Activated CD4-positive, alpha-beta memory T cell treated with anti-CD3 and anti-CD28 coated beads for 36 hours (primary cell): ENCODE measurements at regions of chr2 and their contacts with region 1.

Region 1: GRCh38 chr2:134207564-134208209 is 46.2 kb upstream of the MGAT5 start:
- DNase-seq: peak; percentile 76
- H3K4me3 Mint-ChIP-seq: no peak overlapping the region
- H3K27ac Mint-ChIP-seq: no peak overlapping the region
- H3K4me1 Mint-ChIP-seq: peaks cover 14% of the 10 kb centered on the region
- H3K27me3 Mint-ChIP-seq: no peaks in the 10 kb centered on the region

Region 2: DNA sequence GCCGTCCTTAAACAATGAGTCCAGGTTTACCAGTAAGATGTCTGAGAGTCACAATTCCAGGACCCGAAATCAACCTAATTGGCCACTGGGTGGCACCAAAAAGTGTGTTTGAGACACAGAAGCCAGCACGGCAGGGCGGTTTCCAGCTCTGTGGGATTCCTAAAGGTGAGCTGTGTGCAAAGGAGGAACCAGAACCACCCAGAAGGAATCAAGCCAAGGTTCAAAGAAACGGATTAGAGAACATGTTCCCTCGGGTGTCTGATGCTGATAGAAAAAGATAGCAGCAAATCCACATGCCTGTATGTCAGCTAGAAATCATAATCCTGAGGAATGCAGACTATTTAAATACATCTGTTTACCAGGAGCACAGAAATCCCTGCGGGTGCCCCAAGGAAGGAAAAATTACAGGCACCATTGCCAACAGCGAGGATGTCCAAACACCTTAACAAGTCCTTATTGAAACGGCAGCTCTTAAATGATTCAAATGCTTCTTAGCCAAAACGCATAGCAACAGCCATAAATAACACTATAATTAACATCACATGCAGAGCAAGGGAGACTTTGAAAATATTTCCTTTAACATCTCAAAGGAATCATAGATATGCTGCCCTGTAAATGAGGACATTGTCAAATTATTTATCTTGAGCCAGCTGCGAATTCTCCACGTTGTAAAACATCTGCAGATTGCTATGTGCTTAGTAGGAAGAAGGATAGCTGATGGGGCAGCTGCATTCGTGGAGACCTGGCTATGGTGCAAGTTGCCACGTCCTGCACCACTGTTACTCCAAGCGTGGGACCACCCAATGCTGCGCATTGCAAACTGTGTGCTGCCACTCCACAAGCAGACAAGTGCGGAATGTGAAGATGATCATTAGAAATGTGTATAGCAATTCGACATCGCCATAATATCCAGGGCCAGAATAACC is 320.7 kb before region 1 on chr2:
- CTCF ChIA-PET with region 1: interaction called, 8 read pairs
- POLR2A ChIA-PET with region 1: no interaction called
- intact Hi-C with region 1: loop called (anchors 5 kb)
- DNase-seq: peak; percentile 61
- H3K4me3 Mint-ChIP-seq: no peak overlapping the region
- H3K27ac Mint-ChIP-seq: no peak overlapping the region
- H3K4me1 Mint-ChIP-seq: no peaks in the 10 kb centered on the region
- H3K27me3 Mint-ChIP-seq: peaks cover 5% of the 10 kb centered on the region

Region 3: GRCh38 chr2:134127496-134127895 is 80.2 kb before region 1 on chr2:
- CTCF ChIA-PET with region 1: interaction called, 111 read pairs
- POLR2A ChIA-PET with region 1: interaction called, 21 read pairs
- intact Hi-C with region 1: no loop called
- DNase-seq: peak; percentile 86
- H3K4me3 Mint-ChIP-seq: peak overlapping the region; percentile 25
- H3K27ac Mint-ChIP-seq: no peak overlapping the region
- H3K4me1 Mint-ChIP-seq: peaks cover 73% of the 10 kb centered on the region
- H3K27me3 Mint-ChIP-seq: no peaks in the 10 kb centered on the region

Region 4: DNA sequence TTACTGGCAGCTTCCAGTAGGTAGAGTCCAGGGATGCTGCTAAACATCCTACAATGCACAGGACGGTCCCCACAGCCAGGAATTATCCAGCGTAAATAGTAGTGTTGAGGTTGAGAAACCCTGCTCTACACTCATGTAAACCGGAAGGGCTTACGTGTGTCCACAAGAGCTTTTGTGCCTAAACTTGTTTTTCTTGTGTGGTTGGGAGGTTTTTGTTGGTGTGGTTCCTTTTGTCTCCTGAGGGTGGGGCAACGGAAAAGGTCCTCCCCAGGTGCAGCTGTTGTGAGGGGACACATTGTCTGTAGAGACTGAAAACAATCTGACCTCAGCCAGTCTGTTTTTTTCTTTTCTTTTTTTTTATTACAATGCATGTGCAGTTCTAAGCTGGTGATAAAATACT is 26.5 kb before region 1 on chr2:
- CTCF ChIA-PET with region 1: interaction called, 16 read pairs
- POLR2A ChIA-PET with region 1: no interaction called
- intact Hi-C with region 1: no loop called
- DNase-seq: peak; percentile 51
- H3K4me3 Mint-ChIP-seq: no peak overlapping the region
- H3K27ac Mint-ChIP-seq: peak overlapping the region; percentile 47
- H3K4me1 Mint-ChIP-seq: peaks cover 87% of the 10 kb centered on the region
- H3K27me3 Mint-ChIP-seq: no peaks in the 10 kb centered on the region

Region 5: GRCh38 chr2:134218930-134219658 is 11.4 kb after region 1 on chr2:
- CTCF ChIA-PET with region 1: interaction called, 17 read pairs
- POLR2A ChIA-PET with region 1: interaction called, 4 read pairs
- intact Hi-C with region 1: no loop called
- DNase-seq: peak; percentile 56
- H3K4me3 Mint-ChIP-seq: peak overlapping the region; percentile 49
- H3K27ac Mint-ChIP-seq: peak overlapping the region; percentile 74
- H3K4me1 Mint-ChIP-seq: peaks cover 67% of the 10 kb centered on the region
- H3K27me3 Mint-ChIP-seq: no peaks in the 10 kb centered on the region

Region 6: DNA sequence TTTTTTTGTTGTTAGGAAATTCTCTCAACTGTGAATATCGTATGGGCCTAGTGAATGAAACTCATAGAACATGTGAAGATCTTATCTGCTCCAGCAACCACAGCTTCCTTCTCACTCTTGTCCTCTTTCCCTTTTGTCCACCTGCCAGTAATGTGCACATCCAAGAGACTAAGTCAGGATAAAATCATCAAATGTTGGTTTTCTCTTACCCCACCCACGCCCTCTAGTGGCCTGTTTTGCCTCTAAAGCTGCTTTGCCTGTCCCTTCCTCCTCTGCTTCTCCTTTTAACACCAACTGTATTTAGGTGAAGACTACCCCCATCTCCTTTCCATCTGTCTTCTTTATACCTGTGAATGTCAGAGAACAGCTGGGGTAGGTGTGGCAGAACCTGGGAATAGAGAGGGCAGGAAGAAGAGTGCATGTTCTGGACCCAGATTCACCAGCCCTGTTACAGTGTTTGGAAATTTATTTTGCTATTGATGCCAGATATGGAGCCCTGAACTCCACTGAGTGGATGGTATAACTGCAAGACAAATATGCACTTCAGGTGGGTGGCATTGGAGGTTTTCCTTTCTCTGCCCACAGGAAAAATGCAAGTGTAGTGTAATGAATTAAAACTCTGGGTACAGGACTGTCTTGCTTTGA is 37.8 kb after region 1 on chr2:
- CTCF ChIA-PET with region 1: interaction called, 26 read pairs
- POLR2A ChIA-PET with region 1: no interaction called
- intact Hi-C with region 1: no loop called
- DNase-seq: peak; percentile 82
- H3K4me3 Mint-ChIP-seq: no peak overlapping the region
- H3K27ac Mint-ChIP-seq: no peak overlapping the region
- H3K4me1 Mint-ChIP-seq: peaks cover 82% of the 10 kb centered on the region
- H3K27me3 Mint-ChIP-seq: peaks cover 2% of the 10 kb centered on the region